IMR-90 (cell line): ENCODE measurements at regions of chr2 and their contacts with region 1.

Region 1: DNA sequence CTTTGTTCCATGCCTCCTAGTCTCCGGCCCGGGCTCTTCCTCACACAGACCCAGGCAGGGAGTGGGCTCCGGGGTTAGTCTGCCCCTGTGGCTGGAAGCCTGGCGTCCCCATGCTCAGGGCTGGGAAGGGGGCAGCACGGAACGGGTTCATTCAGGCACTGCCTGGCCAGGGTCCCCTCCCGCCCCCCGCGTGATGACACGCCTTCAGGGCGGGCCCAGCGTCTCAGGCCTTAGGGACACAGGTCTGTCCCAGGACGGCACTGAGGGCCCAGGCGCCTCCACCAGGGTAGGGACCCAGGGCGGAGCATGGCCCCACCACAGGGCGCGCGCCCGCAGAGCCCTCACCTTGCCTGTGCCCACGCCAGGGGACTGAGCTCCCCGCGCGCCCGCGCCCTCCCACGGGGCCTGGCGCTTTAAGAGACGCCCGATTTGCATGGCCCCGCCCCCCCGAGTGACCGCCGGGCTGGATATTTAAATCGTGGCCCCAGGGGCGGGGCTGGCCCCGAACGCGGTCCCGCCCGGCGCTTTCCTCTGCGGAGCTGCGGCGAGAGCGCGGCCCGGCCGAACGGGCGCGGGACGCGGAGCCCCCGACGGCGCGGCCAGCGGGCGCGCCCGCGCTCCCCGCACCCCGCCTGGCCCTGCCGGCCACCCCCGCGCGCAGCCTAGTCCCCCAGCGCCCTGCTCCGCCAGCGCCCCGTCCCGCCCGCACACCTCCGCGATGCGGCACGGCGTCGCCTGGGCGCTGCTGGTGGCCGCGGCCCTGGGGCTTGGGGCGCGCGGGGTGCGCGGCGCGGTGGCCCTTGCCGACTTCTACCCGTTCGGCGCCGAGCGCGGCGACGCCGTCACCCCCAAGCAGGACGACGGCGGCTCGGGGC is at the start of gene SNED1:
- DNase-seq: peak; percentile 66
- ATAC-seq: peak; percentile 94
- H3K4me3 ChIP-seq: peak within 1 kb of the TSS; percentile 55
- H3K27ac ChIP-seq: peak within 1 kb of the TSS; percentile 62
- H3K4me1 ChIP-seq: peaks cover 26% of the 10 kb centered on the region; the same call in 1 of the 2 replicates
- H3K27me3 ChIP-seq: no peaks in the 10 kb centered on the region
- CTCF ChIP-seq: no peak
- POLR2A ChIP-seq: no peak
- RAD21 ChIP-seq: no peak
- total RNA-seq, gene SNED1: 1.1 and 1.4 TPM in 2 replicates

Region 2: GRCh38 chr2:240560480-240561326 is 437.7 kb before region 1 on chr2:
- CTCF ChIA-PET with region 1: no interaction called
- POLR2A ChIA-PET with region 1: no interaction called
- dilution Hi-C with region 1: no loop called
- in situ Hi-C with region 1: no loop called
- intact Hi-C with region 1: loop called (anchors 10 kb)
- DNase-seq: peak; percentile 97
- ATAC-seq: peak; percentile 79
- H3K4me3 ChIP-seq: peak overlapping the region; percentile 73
- H3K27ac ChIP-seq: peak overlapping the region; percentile 84
- H3K4me1 ChIP-seq: peaks cover 16% of the 10 kb centered on the region
- H3K27me3 ChIP-seq: no peaks in the 10 kb centered on the region
- CTCF ChIP-seq: peak; percentile 30; the same call in 1 of the 2 replicates
- POLR2A ChIP-seq: peak; percentile 76
- RAD21 ChIP-seq: no peak

Region 3: GRCh38 chr2:240655931-240656886 is 342.1 kb before region 1 on chr2:
- CTCF ChIA-PET with region 1: no interaction called
- POLR2A ChIA-PET with region 1: no interaction called
- dilution Hi-C with region 1: no loop called
- in situ Hi-C with region 1: no loop called
- intact Hi-C with region 1: no loop called
- DNase-seq: peak; percentile 49
- ATAC-seq: peak; percentile 56
- H3K4me3 ChIP-seq: no peak overlapping the region
- H3K27ac ChIP-seq: no peak overlapping the region
- H3K4me1 ChIP-seq: no peaks in the 10 kb centered on the region
- H3K27me3 ChIP-seq: peaks cover 28% of the 10 kb centered on the region
- CTCF ChIP-seq: no peak
- POLR2A ChIP-seq: no peak
- RAD21 ChIP-seq: no peak

Region 4: GRCh38 chr2:241135737-241136136 is 137.4 kb after region 1 on chr2:
- CTCF ChIA-PET with region 1: no interaction called
- POLR2A ChIA-PET with region 1: no interaction called
- dilution Hi-C with region 1: no loop called
- in situ Hi-C with region 1: no loop called
- intact Hi-C with region 1: no loop called
- DNase-seq: no peak
- ATAC-seq: no peak
- H3K4me3 ChIP-seq: no peak overlapping the region
- H3K27ac ChIP-seq: no peak overlapping the region
- H3K4me1 ChIP-seq: no peaks in the 10 kb centered on the region
- H3K27me3 ChIP-seq: no peaks in the 10 kb centered on the region
- CTCF ChIP-seq: no peak
- POLR2A ChIP-seq: no peak
- RAD21 ChIP-seq: no peak